Activated T-helper 2 cell treated with anti-CD3 and anti-CD28 coated beads, Interferon-gamma antibody, Interleukin-2, Interleukin-4, amounts not matched to agents 10 μg/mL and 5 μg/mL and 100 μg/mL, durations not matched to agents 14 hours and 24 hours and 36 hours (primary cell): ENCODE measurements at regions of chr6 and their contacts with region 1.

Region 1: DNA sequence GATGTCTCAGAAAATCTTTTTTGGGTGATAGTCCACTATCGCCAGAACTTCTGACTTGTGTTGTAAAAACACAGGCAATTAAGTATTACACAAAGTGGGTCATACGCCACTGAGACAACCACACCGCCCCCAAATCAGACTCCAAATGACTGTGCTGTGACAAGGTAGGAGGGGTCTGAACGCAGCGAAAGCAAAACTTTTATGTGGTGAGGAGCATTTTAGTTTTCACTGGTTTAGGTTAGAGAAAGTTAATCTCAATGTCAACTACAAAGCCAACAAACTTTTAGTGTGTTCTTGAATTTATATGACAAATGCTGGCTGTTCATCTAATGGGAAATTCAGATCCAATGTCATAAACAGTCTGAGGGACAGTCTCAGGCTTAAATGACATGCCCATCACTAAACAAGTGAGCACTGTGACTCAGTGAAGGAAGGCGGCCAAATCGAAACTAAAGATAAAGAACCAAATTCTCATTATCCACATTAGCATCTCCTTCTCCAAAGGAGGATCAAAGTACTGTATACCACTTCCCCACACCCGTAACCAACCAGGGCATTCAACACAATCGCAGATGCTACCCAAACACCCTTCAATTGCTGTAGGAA is 186.7 kb downstream of the GJA10 start:
- DNase-seq: peak; percentile 77
- H3K4me3 Mint-ChIP-seq: peak overlapping the region; percentile 94
- H3K27ac Mint-ChIP-seq: peak overlapping the region; percentile 98
- H3K4me1 Mint-ChIP-seq: peaks cover 78% of the 10 kb centered on the region
- H3K27me3 Mint-ChIP-seq: no peaks in the 10 kb centered on the region

Region 2: DNA sequence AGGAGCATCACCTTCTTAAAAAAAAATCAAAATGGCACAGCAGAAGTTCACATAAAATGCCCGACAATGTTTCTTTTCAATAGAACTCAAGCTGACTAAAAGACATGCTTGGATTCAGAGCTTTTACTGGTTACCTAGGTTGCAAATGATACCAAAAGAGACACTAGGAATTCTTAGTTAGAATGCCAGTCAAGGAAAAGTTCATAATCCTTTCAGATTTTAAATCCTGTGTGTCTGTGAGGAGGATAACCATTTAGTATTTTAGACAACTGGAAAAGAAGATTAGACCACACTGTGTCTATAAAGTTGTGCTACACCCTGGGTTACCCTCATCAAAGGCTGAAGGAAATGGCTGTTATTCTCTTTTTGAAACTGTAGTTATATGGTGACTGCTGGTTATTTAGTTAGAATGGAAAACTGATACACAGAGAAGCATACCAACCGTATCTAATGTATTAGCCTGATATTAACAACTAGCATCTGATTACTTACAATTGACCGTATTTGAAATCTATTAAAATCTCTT is 47.2 kb before region 1 on chr6:
- intact Hi-C with region 1: no loop called
- DNase-seq: no peak
- H3K4me3 Mint-ChIP-seq: no peak overlapping the region
- H3K27ac Mint-ChIP-seq: no peak overlapping the region
- H3K4me1 Mint-ChIP-seq: peaks cover 39% of the 10 kb centered on the region
- H3K27me3 Mint-ChIP-seq: no peaks in the 10 kb centered on the region

Region 3: GRCh38 chr6:90044833-90045381 is 36.1 kb before region 1 on chr6:
- intact Hi-C with region 1: loop called (anchors 1 kb)
- DNase-seq: no peak
- H3K4me3 Mint-ChIP-seq: no peak overlapping the region
- H3K27ac Mint-ChIP-seq: no peak overlapping the region
- H3K4me1 Mint-ChIP-seq: peaks cover 34% of the 10 kb centered on the region
- H3K27me3 Mint-ChIP-seq: no peaks in the 10 kb centered on the region

Region 4: DNA sequence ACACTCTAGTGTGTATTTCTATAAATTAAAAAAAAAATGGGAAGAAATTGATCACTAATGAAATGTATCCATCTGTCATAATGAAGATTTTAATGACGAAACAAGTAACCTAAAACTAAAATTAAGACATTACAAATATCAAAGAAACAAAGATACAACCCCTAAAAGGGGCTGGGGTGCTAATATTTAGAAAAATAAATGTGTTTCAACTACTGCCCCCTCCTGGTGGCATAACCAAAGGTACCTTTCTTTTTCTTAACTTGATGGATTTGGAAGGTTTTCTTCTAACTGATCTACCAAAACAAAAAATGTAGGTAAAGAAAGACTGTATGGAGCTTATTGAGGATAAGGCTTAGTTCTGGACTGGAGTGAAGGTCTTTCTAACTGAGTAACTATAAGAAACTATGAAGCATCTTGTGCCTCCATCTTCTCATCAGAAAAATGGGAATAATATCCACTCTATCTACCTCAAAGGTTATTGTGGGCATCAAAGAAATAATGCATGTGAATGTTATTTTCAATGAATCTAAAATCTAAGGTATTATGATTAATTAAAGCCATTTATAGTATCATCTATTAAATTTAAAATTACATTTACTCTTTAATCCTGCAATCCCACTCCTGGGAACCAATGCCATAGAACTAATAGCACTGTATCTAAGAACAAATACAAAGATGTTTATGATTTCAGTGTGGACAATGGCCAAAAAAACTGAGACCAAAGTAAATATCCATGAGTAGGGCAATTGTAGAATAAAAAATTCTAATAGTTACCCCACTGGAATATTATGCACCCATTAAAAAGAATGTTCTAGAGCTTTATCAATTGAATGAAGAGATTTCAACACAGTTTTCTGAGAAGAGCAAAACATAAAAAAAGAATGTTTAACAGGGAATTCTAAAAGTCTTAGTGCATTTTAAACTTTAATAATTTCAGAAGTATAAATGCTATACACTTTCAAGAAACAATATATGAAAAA is 98.5 kb after region 1 on chr6:
- intact Hi-C with region 1: loop called (anchors 1 kb)
- DNase-seq: no peak
- H3K4me3 Mint-ChIP-seq: no peak overlapping the region
- H3K27ac Mint-ChIP-seq: no peak overlapping the region
- H3K4me1 Mint-ChIP-seq: peaks cover 67% of the 10 kb centered on the region
- H3K27me3 Mint-ChIP-seq: no peaks in the 10 kb centered on the region

Region 5: DNA sequence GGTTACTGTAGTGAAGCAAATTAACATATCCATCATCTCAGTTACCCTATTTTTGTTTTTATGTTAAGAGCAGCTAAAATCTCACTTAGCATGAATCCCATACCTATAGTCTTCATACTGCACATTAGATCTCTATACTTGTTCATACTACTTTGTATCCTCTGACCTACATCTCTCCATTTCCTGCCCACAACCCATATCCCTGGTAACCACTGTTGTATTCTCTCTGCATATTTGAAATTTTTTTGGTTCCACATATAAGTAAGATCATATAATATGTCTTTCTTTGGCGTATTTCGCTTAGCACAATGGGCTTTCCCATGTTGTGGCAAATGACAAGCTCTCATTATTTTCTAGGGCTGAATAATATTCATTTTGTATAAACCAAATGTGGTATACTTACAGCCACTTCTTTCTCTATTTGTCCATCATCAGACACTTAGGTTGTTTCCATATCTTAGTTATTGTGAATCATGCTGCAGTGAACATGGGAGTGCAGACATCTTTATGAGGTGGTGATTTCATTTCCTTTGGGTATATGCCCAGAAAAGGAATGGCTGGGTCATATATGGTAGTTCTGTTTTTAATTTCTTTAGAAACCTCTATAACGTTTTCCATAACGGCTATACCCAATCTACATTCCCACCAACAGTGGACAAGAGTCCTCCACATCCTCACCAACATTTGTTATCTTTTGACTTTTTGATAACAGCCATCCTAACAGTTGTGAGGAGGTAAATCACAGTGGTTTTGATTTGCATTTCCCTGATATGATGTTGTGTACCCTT is 175.9 kb after region 1 on chr6:
- intact Hi-C with region 1: loop called (anchors 2 kb)
- DNase-seq: no peak
- H3K4me3 Mint-ChIP-seq: no peak overlapping the region
- H3K27ac Mint-ChIP-seq: peak overlapping the region; percentile 90
- H3K4me1 Mint-ChIP-seq: peaks cover 69% of the 10 kb centered on the region
- H3K27me3 Mint-ChIP-seq: no peaks in the 10 kb centered on the region

Region 6: GRCh38 chr6:90393232-90393884 is 312.4 kb after region 1 on chr6:
- intact Hi-C with region 1: loop called (anchors 1 kb)
- DNase-seq: peak; percentile 71
- H3K4me3 Mint-ChIP-seq: no peak overlapping the region
- H3K27ac Mint-ChIP-seq: peak overlapping the region; percentile 64
- H3K4me1 Mint-ChIP-seq: peaks cover 74% of the 10 kb centered on the region
- H3K27me3 Mint-ChIP-seq: no peaks in the 10 kb centered on the region

Region 7: DNA sequence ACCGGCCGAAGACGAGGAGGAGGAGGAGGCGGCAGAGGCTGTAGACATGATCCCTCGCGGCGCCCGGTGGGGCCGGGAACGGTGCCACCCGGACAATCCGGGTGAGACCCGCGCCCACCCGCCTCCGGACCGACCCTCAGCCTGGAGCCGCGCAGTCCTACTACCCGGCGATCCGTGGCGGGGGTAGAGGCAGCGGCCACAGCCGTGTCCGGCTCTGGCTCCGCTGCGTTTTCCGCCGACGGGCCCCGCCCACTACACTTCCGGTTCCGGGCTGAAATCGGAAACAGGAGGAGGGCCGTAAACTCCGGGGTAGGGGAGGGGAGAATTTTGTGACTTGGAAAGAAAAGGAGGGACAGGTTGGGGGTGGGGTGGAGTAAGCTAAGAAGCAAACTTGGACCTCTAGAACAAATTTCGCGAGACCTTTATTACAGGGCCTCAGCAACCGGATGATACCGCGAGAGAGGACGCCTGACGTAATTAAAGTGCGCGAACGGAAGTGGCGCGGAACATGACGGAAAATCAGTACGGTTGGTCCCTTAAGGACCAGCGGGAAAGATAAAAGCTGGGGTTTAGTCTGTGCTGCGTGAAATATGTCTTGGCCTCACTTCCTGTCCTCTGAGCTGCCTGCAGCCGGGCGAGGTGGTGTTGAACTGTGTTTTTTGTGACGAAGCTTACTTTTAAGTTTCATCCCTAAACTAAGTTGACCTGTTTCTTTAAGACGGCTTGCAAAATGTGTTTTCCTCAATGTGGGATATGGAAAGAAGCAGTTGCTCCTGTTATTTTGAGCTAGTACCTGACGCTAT is 506.1 kb after region 1 on chr6 and contains the start of gene MAP3K7:
- intact Hi-C with region 1: loop called (anchors 10 kb)
- DNase-seq: peak; percentile 93
- H3K4me3 Mint-ChIP-seq: peak within 1 kb of the TSS; percentile 94
- H3K27ac Mint-ChIP-seq: peak within 1 kb of the TSS; percentile 95
- H3K4me1 Mint-ChIP-seq: peaks cover 42% of the 10 kb centered on the region
- H3K27me3 Mint-ChIP-seq: peaks cover 20% of the 10 kb centered on the region
- total RNA-seq, gene MAP3K7: 30.5 and 32.1 TPM in 2 replicates